GM10248 (cell line): ENCODE measurements at regions of chr17 and their contacts with region 1.

Region 1: DNA sequence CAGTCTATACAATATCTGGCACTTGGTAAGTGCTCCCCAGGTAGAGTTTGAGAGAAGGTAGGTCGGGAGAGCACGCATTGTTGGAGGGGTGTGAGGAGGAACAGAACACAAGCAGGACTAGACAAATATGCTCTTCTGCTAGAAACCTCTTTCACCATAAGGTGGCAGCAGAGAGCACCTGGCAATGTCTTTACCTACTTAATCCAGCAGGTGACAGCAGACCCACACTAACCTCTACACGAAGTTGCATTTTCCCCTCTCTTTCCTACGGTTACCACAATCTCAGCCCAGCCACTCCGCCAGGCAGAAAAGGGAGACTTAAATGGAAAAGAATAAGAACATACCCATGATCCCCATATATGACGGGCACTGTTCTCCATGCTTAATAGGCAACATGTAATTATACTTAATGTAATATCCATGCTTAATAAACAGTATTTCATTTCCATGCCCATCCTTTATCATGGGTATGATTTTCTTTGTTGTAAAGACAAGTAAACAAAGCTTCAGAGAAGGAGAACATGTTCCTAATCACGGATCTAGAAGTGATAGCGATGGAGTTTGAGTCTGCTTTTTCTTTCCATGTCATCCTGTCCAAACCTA is 55.1 kb upstream of the CCL2 start:
- DNase-seq: peak; percentile 76
- CTCF ChIP-seq: peak; percentile 100

Region 2: DNA sequence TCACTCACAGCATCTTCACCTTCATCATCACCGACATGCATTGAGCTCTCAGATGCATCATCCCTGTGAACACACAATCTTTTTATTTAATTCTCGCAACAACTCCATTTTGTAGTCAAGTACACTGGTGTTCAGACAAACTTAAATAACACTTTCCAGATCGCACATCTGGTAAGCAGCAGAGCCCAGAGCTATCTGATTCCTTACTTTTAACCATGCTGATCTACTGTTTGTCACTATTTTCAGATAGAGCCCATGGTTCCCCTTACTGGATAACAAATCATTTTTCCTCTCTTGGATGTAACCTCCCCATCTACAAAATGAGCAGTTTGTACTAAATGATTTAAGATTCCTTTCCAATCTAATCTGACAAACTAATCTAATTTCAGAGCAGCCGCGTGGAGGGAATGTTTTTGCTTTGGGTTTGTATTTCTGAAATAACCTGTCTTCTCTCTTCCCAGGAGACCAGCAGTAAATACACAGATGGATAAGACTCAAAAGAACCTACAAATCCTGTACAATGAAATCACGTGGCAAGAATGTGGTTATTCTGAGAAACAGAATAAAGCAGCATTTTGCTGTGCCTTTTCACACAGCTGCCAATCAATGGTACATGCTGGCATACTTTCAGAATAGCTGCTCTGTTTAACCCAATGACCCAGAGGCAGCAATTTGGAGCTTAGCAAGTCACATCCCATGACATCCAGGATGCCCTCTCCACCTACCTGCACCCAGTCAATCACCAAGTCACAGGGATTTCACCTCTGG is 17.8 kb before region 1 on chr17:
- CTCF ChIA-PET with region 1: no interaction called
- POLR2A ChIA-PET with region 1: no interaction called
- DNase-seq: no peak
- CTCF ChIP-seq: no peak

Region 3: GRCh38 chr17:34370997-34371395 is 171.0 kb after region 1 on chr17:
- CTCF ChIA-PET with region 1: interaction called, 11 read pairs
- POLR2A ChIA-PET with region 1: no interaction called
- DNase-seq: no peak
- CTCF ChIP-seq: no peak